CD4-positive, alpha-beta T cell (primary cell): ENCODE measurements at regions of chr11 and their contacts with region 1.

Region 1: DNA sequence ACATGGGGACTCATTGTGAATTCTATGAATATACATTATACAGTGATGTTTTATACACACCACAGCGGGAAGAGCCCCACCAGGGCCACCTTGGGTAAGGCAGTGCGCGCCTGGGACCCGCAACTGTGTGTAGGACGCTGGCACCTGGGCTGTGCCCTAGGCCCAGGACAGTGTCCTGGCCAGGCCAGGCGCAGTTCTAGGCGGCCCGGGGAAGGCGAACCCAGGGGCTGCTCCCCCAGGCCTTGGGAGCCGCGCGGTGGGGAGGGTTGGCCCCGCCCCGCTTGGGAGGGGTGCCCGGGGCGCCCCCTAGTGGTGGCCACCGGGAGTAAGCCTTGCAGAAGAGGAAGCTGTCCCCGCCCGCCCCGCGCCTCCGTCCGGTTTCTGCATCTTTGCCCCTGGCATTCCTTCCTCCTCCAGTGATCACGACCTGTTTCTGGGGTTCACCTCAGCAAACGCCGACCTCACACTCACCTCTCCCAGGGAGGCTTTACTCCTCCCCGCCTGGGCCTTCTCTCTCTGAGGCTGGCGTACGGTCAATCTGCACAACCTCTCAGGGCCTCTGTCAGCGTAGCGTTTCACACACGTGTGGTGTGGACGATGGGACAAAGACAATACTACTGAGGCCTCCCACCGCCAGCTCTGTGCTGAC is 9.5 kb upstream of the EHD1 start:
- DNase-seq: peak; percentile 72 to 91 (median 84)
- ATAC-seq: peak; percentile 87
- H3K4me3 ChIP-seq: peak overlapping the region; percentile 4
- H3K4me3 Mint-ChIP-seq: peak overlapping the region; percentile 74
- H3K27ac ChIP-seq: peak overlapping the region in 1 of 2 donors; percentile 19
- H3K27ac Mint-ChIP-seq: peak overlapping the region; percentile 75
- H3K4me1 ChIP-seq: peaks cover 39% of the 10 kb centered on the region
- H3K4me1 Mint-ChIP-seq: peaks cover 26% of the 10 kb centered on the region
- H3K27me3 ChIP-seq: no peaks in the 10 kb centered on the region
- H3K27me3 Mint-ChIP-seq: no peaks in the 10 kb centered on the region
- CTCF ChIP-seq: peak; percentile 97

Region 2: GRCh38 chr11:64864473-64865285 is 23.2 kb before region 1 on chr11:
- CTCF ChIA-PET with region 1: interaction called, 33 read pairs
- POLR2A ChIA-PET with region 1: interaction called, 767 read pairs
- intact Hi-C with region 1: no loop called
- DNase-seq: peak in 4 of 14 experiments; percentile 43 to 66 (median 55)
- ATAC-seq: no peak
- H3K4me3 ChIP-seq: peak overlapping the region; percentile 47
- H3K4me3 Mint-ChIP-seq: peak overlapping the region; percentile 71
- H3K27ac ChIP-seq: peak overlapping the region; percentile 82 to 89
- H3K27ac Mint-ChIP-seq: peak overlapping the region; percentile 93
- H3K4me1 ChIP-seq: peaks cover 100% of the 10 kb centered on the region
- H3K4me1 Mint-ChIP-seq: peaks cover 92% of the 10 kb centered on the region
- H3K27me3 ChIP-seq: no peaks in the 10 kb centered on the region
- H3K27me3 Mint-ChIP-seq: no peaks in the 10 kb centered on the region
- CTCF ChIP-seq: no peak

Region 3: GRCh38 chr11:64900263-64900678 is 12.4 kb after region 1 on chr11:
- CTCF ChIA-PET with region 1: interaction called, 12 read pairs
- POLR2A ChIA-PET with region 1: no interaction called
- intact Hi-C with region 1: no loop called
- DNase-seq: peak; percentile 44 to 92 (median 62)
- ATAC-seq: peak; percentile 89
- H3K4me3 ChIP-seq: no peak overlapping the region
- H3K4me3 Mint-ChIP-seq: peak overlapping the region; percentile 36
- H3K27ac ChIP-seq: peak overlapping the region; percentile 68 to 73
- H3K27ac Mint-ChIP-seq: peak overlapping the region; percentile 77
- H3K4me1 ChIP-seq: peaks cover 20% of the 10 kb centered on the region
- H3K4me1 Mint-ChIP-seq: peaks cover 13% of the 10 kb centered on the region
- H3K27me3 ChIP-seq: no peaks in the 10 kb centered on the region
- H3K27me3 Mint-ChIP-seq: no peaks in the 10 kb centered on the region
- CTCF ChIP-seq: no peak

Region 4: DNA sequence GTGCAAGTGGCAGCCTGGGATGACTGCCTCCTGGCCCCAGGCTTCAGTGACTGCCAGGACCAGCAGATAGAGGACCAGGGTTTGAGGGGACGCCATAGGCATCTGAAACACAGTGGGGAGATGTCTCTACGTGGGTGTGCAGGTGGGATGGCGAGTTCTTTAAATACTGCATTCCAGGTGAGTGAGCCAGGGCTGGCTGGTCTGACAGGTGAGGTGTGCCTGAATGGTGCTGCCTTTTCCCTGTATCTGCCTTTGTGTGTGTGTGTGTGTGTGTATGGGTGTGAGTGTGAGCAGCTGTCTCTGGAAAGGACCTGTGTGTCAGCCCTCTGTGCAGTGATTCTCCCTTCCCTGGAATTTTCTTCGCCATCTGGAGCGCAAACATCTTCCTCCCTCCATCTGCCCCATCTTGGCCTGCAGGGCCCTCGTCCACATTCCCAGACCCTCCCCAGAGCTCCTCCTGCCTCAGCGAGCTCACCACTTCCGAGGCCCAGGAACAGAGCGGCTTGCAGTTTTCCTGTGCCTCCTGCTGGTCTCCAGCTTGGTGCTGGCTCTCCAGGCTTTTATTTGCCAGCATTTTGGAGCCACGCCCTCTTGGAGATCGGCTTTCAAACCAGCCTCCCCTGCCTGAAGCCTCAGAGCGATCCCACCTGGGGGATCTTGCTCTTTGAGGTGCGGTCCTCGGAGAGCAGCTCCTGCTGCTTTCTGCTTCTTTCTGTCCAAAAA is 47.6 kb after region 1 on chr11 and contains the start of gene GPHA2:
- CTCF ChIA-PET with region 1: no interaction called
- POLR2A ChIA-PET with region 1: no interaction called
- intact Hi-C with region 1: no loop called
- DNase-seq: no peak
- ATAC-seq: no peak
- H3K4me3 ChIP-seq: no peak within 1 kb of the TSS
- H3K4me3 Mint-ChIP-seq: no peak within 1 kb of the TSS
- H3K27ac ChIP-seq: no peak within 1 kb of the TSS
- H3K27ac Mint-ChIP-seq: no peak within 1 kb of the TSS
- H3K4me1 ChIP-seq: no peaks in the 10 kb centered on the region
- H3K4me1 Mint-ChIP-seq: no peaks in the 10 kb centered on the region
- H3K27me3 ChIP-seq: no peaks in the 10 kb centered on the region
- H3K27me3 Mint-ChIP-seq: no peaks in the 10 kb centered on the region
- CTCF ChIP-seq: no peak
- total RNA-seq, gene GPHA2: 0.49 to 0.56 TPM

Region 5: DNA sequence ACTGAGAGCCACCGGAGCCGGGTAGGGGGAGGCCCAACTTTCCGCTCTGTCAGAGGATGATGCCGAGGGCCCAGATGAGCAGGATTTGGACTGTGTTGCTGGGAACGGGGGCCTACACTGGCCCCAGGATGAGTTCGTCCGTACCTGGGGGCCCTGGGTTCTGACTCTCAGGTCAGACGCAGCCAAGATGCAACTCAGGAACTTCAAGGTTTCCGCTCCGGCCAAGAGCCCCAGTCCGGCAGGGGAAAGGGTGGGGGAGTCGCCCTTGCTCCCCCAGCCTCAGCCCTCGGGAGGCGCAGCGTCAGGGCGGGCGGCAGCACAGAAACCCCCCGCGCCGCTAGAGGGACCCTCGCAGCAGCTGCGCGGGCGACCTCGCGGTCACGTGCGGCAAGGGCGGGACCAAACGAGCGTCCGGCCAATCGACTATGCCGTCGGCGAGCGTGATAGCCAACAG is 125.8 kb after region 1 on chr11:
- CTCF ChIA-PET with region 1: no interaction called
- POLR2A ChIA-PET with region 1: no interaction called
- intact Hi-C with region 1: no loop called
- DNase-seq: peak; percentile 66 to 95 (median 82)
- ATAC-seq: peak; percentile 94
- H3K4me3 ChIP-seq: peak overlapping the region; percentile 87
- H3K4me3 Mint-ChIP-seq: peak overlapping the region; percentile 97
- H3K27ac ChIP-seq: peak overlapping the region; percentile 83 to 98
- H3K27ac Mint-ChIP-seq: peak overlapping the region; percentile 96
- H3K4me1 ChIP-seq: peaks cover 26% of the 10 kb centered on the region
- H3K4me1 Mint-ChIP-seq: peaks cover 26% of the 10 kb centered on the region
- H3K27me3 ChIP-seq: no peaks in the 10 kb centered on the region
- H3K27me3 Mint-ChIP-seq: no peaks in the 10 kb centered on the region
- CTCF ChIP-seq: peak; percentile 74